CD4-positive, alpha-beta T cell (primary cell): ENCODE measurements at regions of chr6 and their contacts with region 1.

Region 1: DNA sequence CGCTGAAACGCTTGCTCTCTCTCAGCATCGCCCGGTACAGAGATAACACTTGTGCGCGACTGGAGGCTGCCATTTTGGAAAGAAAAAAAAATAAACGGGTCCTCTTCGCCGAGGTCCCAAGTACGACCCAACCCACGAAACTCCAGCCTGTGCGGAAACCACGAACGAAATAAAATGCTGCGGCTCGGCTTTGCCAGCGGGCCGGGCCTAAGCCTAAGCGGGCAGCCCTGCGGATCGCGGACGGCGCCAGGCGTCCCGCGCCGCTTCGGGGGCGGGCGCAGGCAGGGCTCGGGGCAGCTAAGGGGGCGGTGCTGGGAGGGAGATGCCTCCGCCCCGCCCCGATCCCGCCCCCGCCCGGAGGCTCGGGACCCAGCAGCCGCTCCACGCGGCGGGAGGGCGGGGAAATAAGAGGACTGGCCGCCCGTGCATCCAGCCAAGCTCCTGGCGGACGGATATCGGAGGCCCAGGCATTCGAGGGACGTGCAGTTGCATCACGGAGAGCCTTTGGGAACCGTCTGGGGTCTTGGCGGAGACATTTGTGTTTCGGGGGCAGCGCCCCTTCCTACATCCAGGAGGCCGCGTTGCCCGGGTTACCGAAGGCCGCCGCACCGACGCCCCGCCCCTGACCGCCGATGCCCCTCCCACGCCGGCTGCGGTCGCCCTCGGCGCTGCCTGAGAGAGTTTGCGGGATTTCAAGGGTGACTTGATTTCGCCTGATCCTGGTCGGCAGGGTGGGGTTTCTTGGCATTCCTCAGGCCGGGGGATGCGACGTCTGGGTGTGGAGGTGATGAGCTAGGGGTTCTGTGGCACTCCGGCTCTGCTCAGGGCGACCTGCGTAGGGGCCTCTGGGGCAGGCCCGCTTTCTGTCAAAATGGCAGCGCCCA is at the starts of genes FARS2 and LYRM4:
- DNase-seq: peak; percentile 86 to 96 (median 89)
- ATAC-seq: peak; percentile 75
- H3K4me3 ChIP-seq: peak within 1 kb of the TSS; percentile 86
- H3K4me3 Mint-ChIP-seq: peak within 1 kb of the TSS; percentile 98
- H3K27ac ChIP-seq: peak within 1 kb of the TSS; percentile 98
- H3K27ac Mint-ChIP-seq: peak within 1 kb of the TSS; percentile 100
- H3K4me1 ChIP-seq: peaks cover 13% of the 10 kb centered on the region
- H3K4me1 Mint-ChIP-seq: peaks cover 38% of the 10 kb centered on the region
- H3K27me3 ChIP-seq: no peaks in the 10 kb centered on the region
- H3K27me3 Mint-ChIP-seq: no peaks in the 10 kb centered on the region
- CTCF ChIP-seq: no peak
- total RNA-seq, gene FARS2: 12.6 to 12.8 TPM
- total RNA-seq, gene LYRM4: 24.8 to 28.1 TPM

Region 2: DNA sequence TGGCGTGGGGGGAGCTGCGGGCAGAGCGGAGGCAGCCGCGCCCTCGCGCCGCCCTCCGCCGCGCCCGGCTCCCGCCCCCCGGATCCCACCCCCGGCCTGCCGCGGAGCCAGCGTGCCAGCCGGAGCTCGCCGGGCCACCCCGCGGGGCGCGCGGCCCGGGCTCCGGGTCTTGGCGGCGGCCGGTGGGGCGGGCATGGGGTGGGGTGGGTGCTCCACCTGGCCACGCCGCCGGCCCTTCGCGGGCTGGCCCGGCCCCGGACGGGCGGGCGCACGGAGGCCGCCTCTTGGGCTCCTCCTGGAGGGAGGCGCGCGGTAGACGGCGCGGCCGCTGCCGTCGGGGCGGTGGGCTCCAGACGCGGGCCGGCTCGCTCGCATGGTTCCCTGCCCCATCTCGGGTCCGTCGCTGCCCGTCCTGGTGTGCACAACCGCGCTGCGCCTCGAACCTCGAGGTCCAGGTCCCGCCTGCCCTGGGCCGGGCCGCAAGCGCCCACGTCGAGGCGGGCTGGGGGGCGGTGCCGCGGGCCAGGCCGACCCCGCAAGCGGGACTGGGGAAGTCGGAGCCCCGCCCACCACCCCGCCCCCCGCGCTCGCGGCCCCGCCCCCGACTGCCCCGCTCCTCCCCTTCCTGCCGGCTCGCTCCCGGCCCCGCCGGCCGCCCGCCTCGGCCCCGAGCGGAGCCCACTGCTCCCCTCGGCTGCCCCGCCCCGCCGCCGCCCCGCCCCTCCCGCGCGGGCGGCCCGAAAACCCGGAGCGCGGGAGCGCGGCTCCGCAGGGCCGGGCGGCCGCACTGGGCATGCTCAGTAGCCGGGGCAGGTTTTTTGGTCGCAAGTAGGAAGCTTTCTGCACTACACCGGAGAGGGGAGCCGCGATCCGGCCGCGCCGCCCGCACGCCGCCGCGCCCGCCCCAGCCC is 485.1 kb before region 1 on chr6 and contains the start of gene CDYL:
- CTCF ChIA-PET with region 1: no interaction called
- POLR2A ChIA-PET with region 1: no interaction called
- intact Hi-C with region 1: loop called in 1 of 2 experiments (anchors 2 kb)
- DNase-seq: peak; percentile 73 to 95 (median 88)
- ATAC-seq: peak; percentile 73
- H3K4me3 ChIP-seq: peak within 1 kb of the TSS; percentile 81
- H3K4me3 Mint-ChIP-seq: peak within 1 kb of the TSS; percentile 98
- H3K27ac ChIP-seq: no peak within 1 kb of the TSS
- H3K27ac Mint-ChIP-seq: peak within 1 kb of the TSS; percentile 87
- H3K4me1 ChIP-seq: peaks cover 18% of the 10 kb centered on the region
- H3K4me1 Mint-ChIP-seq: peaks cover 46% of the 10 kb centered on the region
- H3K27me3 ChIP-seq: no peaks in the 10 kb centered on the region
- H3K27me3 Mint-ChIP-seq: no peaks in the 10 kb centered on the region
- CTCF ChIP-seq: no peak
- total RNA-seq, gene CDYL: 23.8 to 23.9 TPM

Region 3: GRCh38 chr6:5174244-5174643 is 86.7 kb before region 1 on chr6:
- CTCF ChIA-PET with region 1: interaction called, 3 read pairs
- POLR2A ChIA-PET with region 1: interaction called, 74 read pairs
- intact Hi-C with region 1: loop called in 1 of 2 experiments (anchors 2 kb)
- DNase-seq: peak; percentile 14 to 90 (median 45)
- ATAC-seq: peak; percentile 89
- H3K4me3 ChIP-seq: peak overlapping the region; percentile 32
- H3K4me3 Mint-ChIP-seq: peak overlapping the region; percentile 66
- H3K27ac ChIP-seq: peak overlapping the region; percentile 53 to 89
- H3K27ac Mint-ChIP-seq: peak overlapping the region; percentile 83
- H3K4me1 ChIP-seq: peaks cover 26% of the 10 kb centered on the region
- H3K4me1 Mint-ChIP-seq: peaks cover 63% of the 10 kb centered on the region
- H3K27me3 ChIP-seq: no peaks in the 10 kb centered on the region
- H3K27me3 Mint-ChIP-seq: no peaks in the 10 kb centered on the region
- CTCF ChIP-seq: no peak

Region 4: DNA sequence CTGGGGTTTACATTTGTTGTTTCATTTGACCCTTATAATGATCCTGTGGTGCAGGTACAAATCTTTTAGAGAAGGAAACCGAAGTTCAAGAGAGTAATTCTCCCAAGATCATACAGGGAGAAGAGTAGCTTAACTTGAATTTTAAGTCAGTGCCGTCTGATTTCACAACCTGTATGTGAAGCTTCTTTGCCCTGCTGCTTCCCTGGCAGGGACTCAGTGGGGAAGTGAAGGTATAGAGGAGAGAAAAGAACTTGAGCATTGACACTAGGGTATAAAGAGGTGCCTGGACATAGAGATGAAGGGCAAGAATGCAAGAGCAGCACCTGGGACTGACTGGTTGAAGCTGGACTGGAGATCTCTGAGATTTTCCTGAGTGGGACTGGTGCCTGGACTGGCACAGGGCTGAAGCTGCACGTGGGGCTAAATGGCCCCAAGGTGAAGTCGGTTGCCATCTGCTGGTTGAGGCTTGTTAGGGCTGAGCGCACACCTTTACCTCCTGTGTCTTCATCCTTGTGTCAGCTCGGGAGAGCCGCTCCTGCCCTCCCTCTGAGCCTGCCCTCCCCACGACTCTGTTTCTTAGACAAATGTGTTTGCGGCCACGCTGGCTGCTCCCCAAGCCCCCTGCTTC is 42.2 kb after region 1 on chr6:
- CTCF ChIA-PET with region 1: interaction called, 8 read pairs
- POLR2A ChIA-PET with region 1: interaction called, 11 read pairs
- intact Hi-C with region 1: no loop called
- DNase-seq: peak; percentile 32 to 82 (median 46)
- ATAC-seq: peak; percentile 92
- H3K4me3 ChIP-seq: no peak overlapping the region
- H3K4me3 Mint-ChIP-seq: peak overlapping the region; percentile 58
- H3K27ac ChIP-seq: no peak overlapping the region
- H3K27ac Mint-ChIP-seq: no peak overlapping the region
- H3K4me1 ChIP-seq: peaks cover 19% of the 10 kb centered on the region
- H3K4me1 Mint-ChIP-seq: peaks cover 45% of the 10 kb centered on the region
- H3K27me3 ChIP-seq: no peaks in the 10 kb centered on the region
- H3K27me3 Mint-ChIP-seq: no peaks in the 10 kb centered on the region
- CTCF ChIP-seq: peak; percentile 63

Region 5: GRCh38 chr6:6008648-6009421 is 747.9 kb after region 1 on chr6:
- CTCF ChIA-PET with region 1: no interaction called
- POLR2A ChIA-PET with region 1: no interaction called
- intact Hi-C with region 1: loop called in 1 of 2 experiments (anchors 5 kb)
- DNase-seq: peak in 5 of 14 experiments; percentile 32 to 63 (median 54)
- ATAC-seq: peak; percentile 54
- H3K4me3 ChIP-seq: peak overlapping the region; percentile 47
- H3K4me3 Mint-ChIP-seq: peak overlapping the region; percentile 69
- H3K27ac ChIP-seq: no peak overlapping the region
- H3K27ac Mint-ChIP-seq: no peak overlapping the region
- H3K4me1 ChIP-seq: peaks cover 47% of the 10 kb centered on the region
- H3K4me1 Mint-ChIP-seq: peaks cover 45% of the 10 kb centered on the region
- H3K27me3 ChIP-seq: peaks cover 54 to 71% of the 10 kb centered on the region in 2 experiments
- H3K27me3 Mint-ChIP-seq: peaks cover 80% of the 10 kb centered on the region
- CTCF ChIP-seq: no peak